ENCODE measurements at regions of chr22 and their contacts with region 1.

Region 1: DNA sequence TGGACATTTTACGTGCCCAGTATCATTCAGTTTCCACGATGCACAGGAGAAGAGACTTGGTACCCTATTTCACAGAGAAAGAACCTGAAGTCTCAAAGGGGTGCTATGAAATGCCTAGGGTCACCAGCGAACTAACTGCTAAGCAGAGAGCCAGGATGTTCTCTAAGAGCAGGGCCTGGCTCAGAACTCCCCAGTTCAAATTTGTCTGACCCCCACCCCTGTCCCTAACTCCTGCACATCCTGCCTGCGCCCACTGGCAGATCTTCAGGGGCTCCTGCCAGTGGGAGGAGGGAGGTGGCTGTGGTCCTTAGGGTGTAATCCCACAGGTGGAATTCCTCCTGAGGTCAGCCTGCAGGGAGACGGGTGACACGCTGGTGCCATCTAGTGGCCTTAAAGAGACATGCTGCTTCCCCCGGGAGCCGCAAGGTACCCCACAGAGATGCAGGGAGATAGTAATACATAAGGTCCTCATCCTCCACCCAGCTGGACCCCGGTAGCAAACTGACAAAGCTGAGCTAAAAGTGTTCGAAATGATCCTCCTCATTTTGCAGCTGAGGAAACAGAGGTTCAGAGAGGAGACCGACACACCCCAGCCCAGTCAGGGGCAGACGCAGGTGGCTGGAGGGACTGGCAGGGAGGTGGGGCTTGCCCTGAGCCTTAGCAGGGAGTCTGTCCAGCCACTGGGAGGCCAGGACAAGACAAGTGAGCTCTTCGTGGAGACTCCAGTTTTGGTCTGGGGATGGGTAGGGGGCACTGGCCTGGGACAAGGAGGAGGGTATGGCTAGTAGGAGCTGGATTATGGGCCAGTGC is 34.1 kb downstream of the MB start:
- DNase-seq: peak in 1 of 2 donors; percentile 32
- H3K4me3 ChIP-seq: no peak overlapping the region
- H3K27ac ChIP-seq: no peak overlapping the region
- H3K4me1 ChIP-seq: peaks cover 4 to 6% of the 10 kb centered on the region in 2 donors
- H3K27me3 ChIP-seq: no peaks in the 10 kb centered on the region
- CTCF ChIP-seq: peak; percentile 45 to 92 (median 88)
- POLR2A ChIP-seq: no peak

Region 2: DNA sequence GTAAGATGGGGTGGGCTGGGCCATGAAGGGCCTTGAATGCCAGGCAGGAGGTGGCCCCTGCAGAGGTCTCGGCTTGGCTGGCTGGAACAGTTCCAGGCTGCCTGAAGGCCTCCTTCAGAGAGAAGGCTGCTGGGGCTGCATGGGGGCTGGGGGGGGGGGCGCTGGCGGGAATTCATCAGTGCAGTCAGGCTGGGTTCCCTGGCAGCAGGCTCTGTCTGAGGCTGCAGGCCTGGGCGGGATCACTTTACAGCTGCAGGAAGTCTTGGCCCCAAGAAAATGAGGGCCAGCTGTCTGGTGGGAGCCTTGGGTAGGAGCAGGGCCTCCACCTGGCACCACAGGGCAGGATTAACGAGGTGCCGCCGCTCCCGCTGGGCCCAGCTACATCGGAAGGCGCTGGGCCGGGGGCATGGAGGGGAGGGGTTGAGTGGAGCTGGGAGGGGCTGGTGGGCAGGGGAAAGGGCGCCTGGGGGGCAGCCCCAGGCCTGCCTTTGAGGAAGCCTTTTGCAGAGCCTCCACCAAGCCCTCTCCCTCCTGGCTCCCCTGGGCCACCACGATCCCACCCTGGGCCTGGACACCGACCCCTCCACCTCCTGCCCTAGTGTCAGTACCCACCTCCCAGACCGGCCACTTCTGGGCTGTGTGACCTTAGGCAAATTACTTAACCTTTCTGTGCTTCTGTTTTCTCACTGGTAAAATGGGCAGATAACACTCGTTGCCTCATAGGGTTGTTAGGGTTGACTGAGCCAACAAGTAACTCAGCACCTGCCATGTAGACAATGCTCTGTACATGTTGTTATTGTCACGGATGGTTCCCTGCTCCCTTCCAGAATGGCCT is 233.1 kb before region 1 on chr22:
- intact Hi-C with region 1: loop called (anchors 10 kb)
- DNase-seq: no peak
- H3K4me3 ChIP-seq: no peak overlapping the region
- H3K27ac ChIP-seq: peak overlapping the region; percentile 56 to 74
- H3K4me1 ChIP-seq: peaks cover 0 to 8% of the 10 kb centered on the region in 2 donors
- H3K27me3 ChIP-seq: no peaks in the 10 kb centered on the region
- CTCF ChIP-seq: no peak
- POLR2A ChIP-seq: no peak

Region 3: DNA sequence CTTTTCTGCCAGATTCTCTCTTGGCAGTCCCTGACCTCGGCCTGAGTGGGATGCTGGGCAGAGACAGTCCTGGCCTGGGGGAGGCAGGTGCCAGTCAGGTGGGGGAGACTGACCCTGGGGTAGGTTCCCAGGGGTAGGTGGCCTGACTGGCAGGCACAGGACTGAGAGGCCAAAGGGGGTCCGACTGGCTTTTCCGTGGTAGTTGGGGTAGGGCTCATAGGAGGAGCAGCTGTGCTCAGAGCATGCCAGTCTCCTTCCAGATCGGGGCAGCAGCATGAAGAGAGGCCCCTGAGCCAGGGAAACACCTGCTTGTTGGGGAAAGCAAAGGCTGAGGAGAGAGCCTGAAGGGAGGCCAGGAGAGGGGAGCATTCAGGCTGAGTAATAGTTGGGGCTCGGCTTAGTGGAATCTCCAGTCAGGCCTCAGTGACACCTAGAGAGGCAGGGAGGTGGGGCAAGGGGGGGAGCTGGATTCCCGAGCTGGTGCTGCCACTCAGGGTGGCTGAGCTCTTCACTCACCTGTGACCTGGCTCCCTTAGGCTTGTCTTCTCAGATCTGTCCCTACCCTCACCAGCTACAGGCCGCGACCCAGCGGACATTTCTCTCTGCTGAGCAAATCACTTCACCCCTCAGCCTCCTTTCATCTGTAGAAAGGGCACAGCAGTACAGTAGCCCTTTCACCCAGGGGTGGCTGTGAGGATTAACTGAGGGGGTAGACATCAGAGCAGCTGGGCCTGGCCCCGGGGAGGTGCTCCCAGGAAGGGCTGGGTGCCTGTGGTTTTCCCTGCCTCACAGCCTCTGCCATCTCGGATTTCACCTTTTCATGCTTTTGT is 156.9 kb before region 1 on chr22:
- intact Hi-C with region 1: loop called (anchors 10 kb)
- DNase-seq: no peak
- H3K4me3 ChIP-seq: no peak overlapping the region
- H3K27ac ChIP-seq: no peak overlapping the region
- H3K4me1 ChIP-seq: no peaks in the 10 kb centered on the region
- H3K27me3 ChIP-seq: no peaks in the 10 kb centered on the region
- CTCF ChIP-seq: no peak
- POLR2A ChIP-seq: no peak

Region 4: GRCh38 chr22:35498026-35498800 is 84.9 kb before region 1 on chr22:
- intact Hi-C with region 1: loop called (anchors 2 kb)
- DNase-seq: no peak
- H3K4me3 ChIP-seq: no peak overlapping the region
- H3K27ac ChIP-seq: no peak overlapping the region
- H3K4me1 ChIP-seq: no peaks in the 10 kb centered on the region
- H3K27me3 ChIP-seq: no peaks in the 10 kb centered on the region
- CTCF ChIP-seq: no peak
- POLR2A ChIP-seq: no peak

Region 5: GRCh38 chr22:35552196-35552842 is 30.7 kb before region 1 on chr22:
- intact Hi-C with region 1: no loop called
- DNase-seq: no peak
- H3K4me3 ChIP-seq: no peak overlapping the region
- H3K27ac ChIP-seq: no peak overlapping the region
- H3K4me1 ChIP-seq: no peaks in the 10 kb centered on the region
- H3K27me3 ChIP-seq: no peaks in the 10 kb centered on the region
- CTCF ChIP-seq: no peak
- POLR2A ChIP-seq: no peak

Region 6: GRCh38 chr22:36641902-36642640 is 1059.0 kb after region 1 on chr22:
- intact Hi-C with region 1: no loop called
- DNase-seq: no peak
- H3K4me3 ChIP-seq: no peak overlapping the region
- H3K27ac ChIP-seq: no peak overlapping the region
- H3K4me1 ChIP-seq: no peaks in the 10 kb centered on the region
- H3K27me3 ChIP-seq: peaks cover 0 to 32% of the 10 kb centered on the region in 2 donors
- CTCF ChIP-seq: no peak
- POLR2A ChIP-seq: no peak

Measured in breast epithelium (tissue), 4 donors.